Calu3 (cell line): ENCODE measurements at regions of chr19 and their contacts with region 1.

Region 1: GRCh38 chr19:17932485-17933338 is at the start of gene CCDC124:
- DNase-seq: peak; percentile 90
- H3K4me3 Mint-ChIP-seq: peak within 1 kb of the TSS; percentile 93
- H3K27ac Mint-ChIP-seq: peak within 1 kb of the TSS; percentile 97
- H3K4me1 Mint-ChIP-seq: peaks cover 8% of the 10 kb centered on the region
- H3K27me3 Mint-ChIP-seq: no peaks in the 10 kb centered on the region
- CTCF ChIP-seq: peak; percentile 62
- total RNA-seq, gene CCDC124: 51.1 and 53.4 TPM in 2 replicates

Region 2: GRCh38 chr19:17859533-17860330 is 73.0 kb before region 1 on chr19 and contains the start of gene RPL18A:
- CTCF ChIA-PET with region 1: interaction called, 87 read pairs
- intact Hi-C with region 1: no loop called
- DNase-seq: peak; percentile 92
- H3K4me3 Mint-ChIP-seq: peak within 1 kb of the TSS; percentile 96
- H3K27ac Mint-ChIP-seq: peak within 1 kb of the TSS; percentile 99
- H3K4me1 Mint-ChIP-seq: peaks cover 10% of the 10 kb centered on the region
- H3K27me3 Mint-ChIP-seq: no peaks in the 10 kb centered on the region
- CTCF ChIP-seq: peak; percentile 42
- total RNA-seq, gene RPL18A: 955 and 1,054 TPM in 2 replicates

Region 3: GRCh38 chr19:17871878-17872250 is 60.8 kb before region 1 on chr19 and contains the start of gene SLC5A5:
- CTCF ChIA-PET with region 1: interaction called, 51 read pairs
- intact Hi-C with region 1: loop called (anchors 2 kb)
- DNase-seq: no peak
- H3K4me3 Mint-ChIP-seq: no peak within 1 kb of the TSS
- H3K27ac Mint-ChIP-seq: no peak within 1 kb of the TSS
- H3K4me1 Mint-ChIP-seq: no peaks in the 10 kb centered on the region
- H3K27me3 Mint-ChIP-seq: peaks cover 12% of the 10 kb centered on the region
- CTCF ChIP-seq: no peak
- total RNA-seq, gene SLC5A5: not detected in 2 replicates

Region 4: GRCh38 chr19:17915951-17916593 is 16.6 kb before region 1 on chr19:
- CTCF ChIA-PET with region 1: no interaction called
- intact Hi-C with region 1: no loop called
- DNase-seq: peak; percentile 33
- H3K4me3 Mint-ChIP-seq: no peak overlapping the region
- H3K27ac Mint-ChIP-seq: peak overlapping the region; percentile 15
- H3K4me1 Mint-ChIP-seq: no peaks in the 10 kb centered on the region
- H3K27me3 Mint-ChIP-seq: no peaks in the 10 kb centered on the region
- CTCF ChIP-seq: no peak

Region 5: DNA sequence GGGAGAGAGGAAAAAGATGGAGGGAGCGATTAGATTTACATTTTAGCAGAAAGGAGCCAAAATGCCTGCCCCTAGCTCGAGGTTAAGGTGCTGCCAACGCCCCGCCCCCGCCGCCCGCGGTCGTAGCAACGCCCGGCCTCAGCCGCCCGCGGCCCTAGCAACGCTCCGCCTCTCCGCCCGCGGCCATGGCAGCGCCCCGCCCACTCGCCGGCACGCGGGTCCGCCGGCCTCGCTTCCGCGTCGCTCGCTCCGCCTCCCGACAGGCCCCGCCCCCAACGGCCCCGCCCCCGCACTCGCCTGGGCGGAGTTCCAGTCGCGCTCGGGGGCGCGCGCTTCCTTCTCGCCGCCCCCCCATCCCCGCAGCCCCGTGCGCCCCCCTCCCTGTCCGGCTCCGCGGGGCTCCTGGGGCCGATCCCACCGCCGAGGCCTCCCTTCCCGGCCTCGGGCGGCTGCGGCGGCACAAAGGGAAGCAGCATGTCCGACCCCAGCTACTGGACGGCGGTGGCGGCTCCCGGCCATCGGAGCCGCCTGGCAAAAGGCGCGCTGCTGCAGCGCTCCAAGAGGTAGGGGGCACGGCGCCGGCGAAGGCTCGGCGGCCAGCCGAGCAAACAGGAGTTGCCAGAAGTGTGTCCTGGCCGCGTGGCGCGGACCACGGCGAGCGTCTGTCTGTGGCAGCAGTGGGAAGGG is 185.1 kb after region 1 on chr19:
- CTCF ChIA-PET with region 1: no interaction called
- intact Hi-C with region 1: no loop called
- DNase-seq: peak; percentile 90
- H3K4me3 Mint-ChIP-seq: peak overlapping the region; percentile 90
- H3K27ac Mint-ChIP-seq: peak overlapping the region; percentile 76
- H3K4me1 Mint-ChIP-seq: peaks cover 13% of the 10 kb centered on the region
- H3K27me3 Mint-ChIP-seq: no peaks in the 10 kb centered on the region
- CTCF ChIP-seq: no peak